Posterior vena cava (tissue), 2 donors: ENCODE measurements at regions of chr20 and their contacts with region 1.

Region 1: DNA sequence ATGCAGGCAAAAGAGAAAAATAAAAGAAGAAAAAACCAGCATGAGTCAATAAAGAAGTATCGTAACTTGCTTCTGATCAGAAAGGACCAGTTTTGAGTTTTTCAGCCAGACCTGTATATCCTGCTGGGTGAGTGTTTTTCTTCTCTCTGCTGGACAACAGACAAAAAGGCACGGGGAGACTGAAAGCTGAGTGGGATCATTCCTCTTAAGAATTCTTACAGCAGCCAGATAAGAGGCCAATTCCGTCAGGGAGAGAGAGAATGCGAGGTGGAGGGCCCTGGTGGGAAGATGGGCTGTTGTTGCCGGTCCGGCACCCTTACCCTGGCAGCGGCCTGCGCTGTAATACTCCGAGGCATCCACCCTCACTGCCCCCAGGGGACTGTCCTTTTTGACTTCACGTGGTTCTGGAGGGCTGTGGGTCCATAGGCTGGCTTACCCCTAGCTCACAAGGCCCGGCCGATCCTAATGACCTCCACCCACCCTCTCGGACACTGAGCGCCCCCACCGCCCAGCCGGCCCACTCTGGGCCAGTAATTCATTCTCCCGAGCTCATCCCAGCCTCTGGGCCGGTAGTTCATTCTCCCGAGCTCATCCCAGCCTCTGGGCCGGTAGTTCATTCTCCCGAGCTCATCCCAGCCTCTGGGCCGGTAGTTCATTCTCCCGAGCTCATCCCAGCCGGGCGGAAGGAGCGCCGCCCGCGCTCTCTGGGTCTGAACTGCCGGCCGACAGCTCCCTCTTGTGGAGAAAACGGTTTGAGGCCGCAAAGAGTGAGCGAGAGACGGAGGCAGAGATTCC is 118.3 kb upstream of the SIRPA start:
- DNase-seq: peak; percentile 97

Region 2: GRCh38 chr20:2093159-2093781 is 316.4 kb after region 1 on chr20:
- intact Hi-C with region 1: no loop called
- DNase-seq: no peak

Region 3: GRCh38 chr20:2162125-2162822 is 385.4 kb after region 1 on chr20:
- intact Hi-C with region 1: loop called in 1 of 2 experiments (anchors 10 kb)
- DNase-seq: no peak